SK-N-SH (cell line): ENCODE measurements at regions of chr19 and their contacts with region 1.

Region 1: GRCh38 chr19:12847159-12848139 is 9.1 kb downstream of the MAST1 start:
- DNase-seq: peak; percentile 95
- H3K4me3 ChIP-seq: peak overlapping the region in 1 of 2 experiments; percentile 31; a peak in 1 of 4 replicates
- H3K27ac ChIP-seq: no peak overlapping the region; a peak in 1 of 4 replicates
- H3K4me1 ChIP-seq: peaks cover 0 to 2% of the 10 kb centered on the region in 2 experiments; a peak in 1 of 4 replicates
- H3K27me3 ChIP-seq: no peaks in the 10 kb centered on the region
- CTCF ChIP-seq: peak; percentile 93
- EP300 ChIP-seq: no peak
- RAD21 ChIP-seq: peak; percentile 89

Region 2: DNA sequence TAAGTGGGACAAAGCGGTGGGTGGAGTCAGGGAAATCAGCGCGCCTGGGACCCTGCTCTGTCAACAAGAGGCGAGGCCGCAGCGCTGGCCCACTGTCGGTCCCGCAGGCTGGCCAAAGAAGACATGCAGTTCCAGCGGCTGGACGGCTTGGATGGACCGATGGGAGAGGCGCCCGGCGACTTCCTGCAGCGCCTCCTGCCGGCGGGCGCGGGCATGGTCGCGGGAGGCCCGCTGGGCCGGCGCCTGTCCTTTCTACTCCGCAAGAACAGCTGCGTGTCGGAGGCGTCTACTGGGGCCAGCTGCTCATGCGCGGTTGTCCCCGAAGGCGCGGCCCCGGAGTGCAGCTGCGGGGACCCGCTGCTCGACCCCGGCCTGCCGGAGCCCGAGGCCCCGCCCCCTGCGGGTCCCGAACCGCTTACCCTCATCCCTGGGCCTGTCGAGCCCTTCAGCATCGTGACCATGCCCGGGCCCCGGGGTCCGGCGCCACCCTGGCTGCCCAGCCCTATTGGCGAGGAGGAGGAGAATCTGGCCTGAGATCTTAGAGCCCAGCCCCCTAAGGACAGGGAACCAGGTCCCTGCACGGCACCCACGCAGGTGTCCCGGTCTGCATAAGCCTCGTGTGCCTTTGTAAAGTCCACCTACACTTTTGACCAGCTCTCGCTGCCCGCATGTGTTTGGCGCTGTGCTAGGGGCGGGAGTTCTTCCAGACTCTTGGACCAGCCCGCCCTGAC is 89.7 kb before region 1 on chr19:
- CTCF ChIA-PET with region 1: interaction called, 55 read pairs
- POLR2A ChIA-PET with region 1: no interaction called
- DNase-seq: peak; percentile 94
- H3K4me3 ChIP-seq: peak overlapping the region; percentile 31 to 44; a peak in 3 of 4 replicates
- H3K27ac ChIP-seq: no peak overlapping the region
- H3K4me1 ChIP-seq: no peaks in the 10 kb centered on the region; a peak in 1 of 4 replicates
- H3K27me3 ChIP-seq: peaks cover 12% of the 10 kb centered on the region; the same call in 1 of the 2 replicates
- CTCF ChIP-seq: peak; percentile 84
- EP300 ChIP-seq: no peak
- RAD21 ChIP-seq: peak; percentile 60

Region 3: GRCh38 chr19:12777217-12778016 is 70.0 kb before region 1 on chr19:
- CTCF ChIA-PET with region 1: interaction called, 30 read pairs
- POLR2A ChIA-PET with region 1: interaction called, 5 read pairs
- DNase-seq: peak; percentile 89
- H3K4me3 ChIP-seq: peak overlapping the region; percentile 52 to 64
- H3K27ac ChIP-seq: peak overlapping the region; percentile 90 to 98
- H3K4me1 ChIP-seq: peaks cover 24 to 41% of the 10 kb centered on the region in 2 experiments; a peak in 3 of 4 replicates
- H3K27me3 ChIP-seq: no peaks in the 10 kb centered on the region
- CTCF ChIP-seq: peak; percentile 93
- EP300 ChIP-seq: no peak; a peak in 1 of 4 replicates
- RAD21 ChIP-seq: peak; percentile 83

Region 4: DNA sequence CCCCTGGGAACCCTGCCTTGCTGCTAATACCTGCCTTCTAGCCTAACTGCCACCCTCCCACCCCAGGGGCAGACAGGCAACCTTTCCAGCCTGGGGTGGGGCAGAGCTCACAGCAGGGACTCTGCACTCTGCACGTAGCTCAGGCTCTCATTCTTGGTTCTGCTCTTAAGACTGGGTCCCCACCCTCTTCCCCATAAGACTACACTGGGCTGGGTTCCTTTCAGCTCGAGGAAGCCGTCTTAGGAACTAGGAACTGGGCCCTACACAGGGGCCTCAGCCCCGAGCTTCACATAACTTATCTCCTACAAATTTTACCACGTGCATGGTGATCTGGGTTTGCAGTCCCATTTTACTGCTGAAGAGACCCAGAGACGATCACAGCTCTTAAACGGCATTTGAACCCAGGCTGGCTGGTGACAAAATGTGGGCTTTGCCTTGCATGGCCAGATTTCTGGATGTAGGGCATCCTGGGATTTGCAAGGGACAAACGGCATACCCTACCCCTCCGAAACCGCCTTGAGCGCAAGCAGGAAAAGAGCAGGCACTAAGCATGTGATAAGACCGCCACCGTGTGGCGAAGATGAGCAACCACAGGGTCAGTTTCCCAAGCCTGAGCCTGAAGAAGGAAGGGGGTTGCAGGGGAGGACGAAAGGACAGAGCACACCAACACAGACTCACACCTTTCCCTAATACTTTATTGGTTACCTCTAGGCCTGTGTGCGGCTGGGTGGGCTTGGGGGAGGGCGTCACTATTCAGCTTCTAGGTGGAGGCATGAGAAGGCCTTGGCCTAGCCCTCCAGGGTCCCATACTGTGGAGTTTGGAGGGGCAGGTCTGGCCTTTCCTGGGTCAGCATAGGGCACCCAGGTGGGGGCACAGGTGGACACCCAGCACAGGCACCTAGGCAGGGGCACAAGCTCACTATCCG is 51.0 kb before region 1 on chr19:
- CTCF ChIA-PET with region 1: interaction called, 41 read pairs
- POLR2A ChIA-PET with region 1: interaction called, 3 read pairs
- DNase-seq: peak; percentile 77
- H3K4me3 ChIP-seq: peak overlapping the region in 1 of 2 experiments; percentile 38; a peak in 1 of 4 replicates
- H3K27ac ChIP-seq: peak overlapping the region in 1 of 2 experiments; percentile 36; a peak in 1 of 4 replicates
- H3K4me1 ChIP-seq: peaks cover 9 to 23% of the 10 kb centered on the region in 2 experiments; a peak in 1 of 4 replicates
- H3K27me3 ChIP-seq: no peaks in the 10 kb centered on the region
- CTCF ChIP-seq: peak; percentile 87
- EP300 ChIP-seq: no peak
- RAD21 ChIP-seq: peak; percentile 99

Region 5: GRCh38 chr19:12815088-12815487 is 32.4 kb before region 1 on chr19:
- CTCF ChIA-PET with region 1: interaction called, 16 read pairs
- POLR2A ChIA-PET with region 1: no interaction called
- DNase-seq: no peak
- H3K4me3 ChIP-seq: no peak overlapping the region
- H3K27ac ChIP-seq: no peak overlapping the region
- H3K4me1 ChIP-seq: no peaks in the 10 kb centered on the region
- H3K27me3 ChIP-seq: no peaks in the 10 kb centered on the region
- CTCF ChIP-seq: no peak
- EP300 ChIP-seq: no peak
- RAD21 ChIP-seq: no peak

Region 6: GRCh38 chr19:12858041-12858928 is 10.8 kb after region 1 on chr19:
- CTCF ChIA-PET with region 1: interaction called, 69 read pairs
- POLR2A ChIA-PET with region 1: no interaction called
- DNase-seq: no peak
- H3K4me3 ChIP-seq: no peak overlapping the region
- H3K27ac ChIP-seq: no peak overlapping the region
- H3K4me1 ChIP-seq: no peaks in the 10 kb centered on the region
- H3K27me3 ChIP-seq: no peaks in the 10 kb centered on the region
- CTCF ChIP-seq: no peak
- EP300 ChIP-seq: no peak
- RAD21 ChIP-seq: no peak

Region 7: GRCh38 chr19:12872941-12873890 is 25.8 kb after region 1 on chr19:
- CTCF ChIA-PET with region 1: interaction called, 62 read pairs
- POLR2A ChIA-PET with region 1: interaction called, 3 read pairs
- DNase-seq: peak; percentile 83
- H3K4me3 ChIP-seq: no peak overlapping the region
- H3K27ac ChIP-seq: no peak overlapping the region
- H3K4me1 ChIP-seq: no peaks in the 10 kb centered on the region
- H3K27me3 ChIP-seq: no peaks in the 10 kb centered on the region
- CTCF ChIP-seq: no peak
- EP300 ChIP-seq: no peak
- RAD21 ChIP-seq: no peak